Activated CD8-positive, alpha-beta memory T cell treated with anti-CD3 and anti-CD28 coated beads, Interleukin-2, amount 10 ng/mL, durations not matched to agents 7 days and 5 days (primary cell): ENCODE measurements at regions of chr7 and their contacts with region 1.

Region 1: DNA sequence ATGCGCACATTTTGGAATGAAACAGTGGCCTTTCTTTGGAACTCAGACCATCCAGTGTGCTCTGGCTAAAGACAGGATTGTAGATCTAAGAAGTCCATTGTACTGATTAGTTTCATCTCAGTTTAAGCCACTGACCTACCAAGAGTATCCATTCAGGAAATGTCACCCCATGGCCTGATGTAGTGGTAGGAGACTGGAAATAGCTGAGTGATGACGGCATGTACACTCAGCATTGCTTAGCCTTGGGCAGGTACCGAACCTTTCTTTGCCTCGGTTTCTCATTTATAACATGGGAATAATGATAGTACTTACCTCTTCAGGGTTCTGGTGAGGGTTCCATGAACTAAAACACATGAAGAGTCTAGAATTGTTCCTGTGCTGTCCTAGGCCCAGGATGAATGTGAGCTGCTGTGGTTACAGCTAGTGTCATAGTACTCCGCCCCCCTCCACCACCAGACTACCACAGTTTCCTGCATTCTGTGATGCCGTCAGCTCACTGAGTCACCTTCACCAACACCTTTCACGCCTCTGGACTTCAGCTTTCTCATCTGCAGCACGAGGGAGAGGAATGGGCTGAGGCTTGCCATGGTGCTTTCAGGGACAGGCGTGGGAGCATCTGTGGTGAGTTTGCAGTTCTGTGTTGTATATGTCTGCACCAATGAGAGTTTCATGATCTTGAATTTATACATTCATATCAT is 484.0 kb upstream of the GALNT17 start:
- DNase-seq: peak; percentile 96
- ATAC-seq: peak; percentile 97
- H3K4me3 Mint-ChIP-seq: peak overlapping the region; percentile 52
- H3K27ac Mint-ChIP-seq: peak overlapping the region; percentile 86
- H3K4me1 Mint-ChIP-seq: peaks cover 35% of the 10 kb centered on the region
- H3K27me3 Mint-ChIP-seq: peaks cover 31% of the 10 kb centered on the region

Region 2: DNA sequence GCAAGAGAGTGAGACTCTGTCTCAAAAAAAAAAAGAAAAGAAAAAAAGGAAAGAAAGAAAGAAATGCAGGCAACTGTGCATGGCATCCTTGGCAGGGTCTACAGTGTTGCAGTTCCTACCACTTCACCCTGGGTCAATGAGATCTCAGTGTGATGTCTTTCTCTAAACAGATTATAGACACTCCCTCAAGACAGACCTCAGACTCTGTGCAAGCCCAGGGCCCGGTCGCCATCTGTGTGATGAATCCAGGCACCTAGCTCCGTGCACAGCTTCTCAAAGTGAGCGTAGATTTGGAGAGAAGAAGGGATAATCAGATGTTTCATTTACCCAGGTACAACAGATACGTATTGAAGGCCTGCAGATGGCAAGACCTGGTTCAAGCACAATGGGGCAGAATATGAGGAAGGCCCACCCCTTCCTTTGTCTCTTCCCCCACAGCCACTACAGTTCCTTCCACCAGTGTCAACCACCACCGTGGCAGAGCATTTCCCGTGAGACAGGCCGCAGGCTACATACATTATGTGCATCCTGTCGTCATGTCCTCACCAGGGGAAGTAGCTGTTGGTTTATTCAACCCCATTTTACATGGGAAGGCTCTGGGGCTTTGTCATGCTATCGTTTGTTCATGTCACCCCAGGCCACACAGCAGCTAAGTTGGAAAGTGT is 12.3 kb after region 1 on chr7:
- CTCF ChIA-PET with region 1: interaction called, 25 read pairs
- DNase-seq: peak; percentile 90
- ATAC-seq: peak; percentile 90
- H3K4me3 Mint-ChIP-seq: no peak overlapping the region
- H3K27ac Mint-ChIP-seq: peak overlapping the region; percentile 87
- H3K4me1 Mint-ChIP-seq: peaks cover 26% of the 10 kb centered on the region
- H3K27me3 Mint-ChIP-seq: no peaks in the 10 kb centered on the region

Region 3: GRCh38 chr7:70693686-70694360 is 45.9 kb after region 1 on chr7:
- CTCF ChIA-PET with region 1: interaction called, 11 read pairs
- DNase-seq: peak; percentile 53
- ATAC-seq: peak; percentile 81
- H3K4me3 Mint-ChIP-seq: peak overlapping the region; percentile 63
- H3K27ac Mint-ChIP-seq: no peak overlapping the region
- H3K4me1 Mint-ChIP-seq: peaks cover 18% of the 10 kb centered on the region
- H3K27me3 Mint-ChIP-seq: peaks cover 53% of the 10 kb centered on the region

Region 4: GRCh38 chr7:70870349-70870748 is 222.4 kb after region 1 on chr7:
- CTCF ChIA-PET with region 1: no interaction called
- DNase-seq: no peak
- ATAC-seq: no peak
- H3K4me3 Mint-ChIP-seq: no peak overlapping the region
- H3K27ac Mint-ChIP-seq: no peak overlapping the region
- H3K4me1 Mint-ChIP-seq: no peaks in the 10 kb centered on the region
- H3K27me3 Mint-ChIP-seq: no peaks in the 10 kb centered on the region